ENCODE measurements at regions of chr6 and their contacts with region 1.

Region 1: GRCh38 chr6:127120787-127121636 is 2.5 kb downstream of the RSPO3 start:
- DNase-seq: peak; percentile 81 to 87
- H3K4me3 ChIP-seq: no peak overlapping the region
- H3K4me3 Mint-ChIP-seq: no peak overlapping the region
- H3K27ac Mint-ChIP-seq: peak overlapping the region; percentile 22
- H3K4me1 ChIP-seq: 0 out of 2 replicates have a peak, but pooled peaks cover 2% of the 10 kb centered on the region
- H3K4me1 Mint-ChIP-seq: peaks cover 14% of the 10 kb centered on the region
- H3K27me3 ChIP-seq: no peaks in the 10 kb centered on the region
- H3K27me3 Mint-ChIP-seq: no peaks in the 10 kb centered on the region
- CTCF ChIP-seq: peak; percentile 83 to 88

Region 2: DNA sequence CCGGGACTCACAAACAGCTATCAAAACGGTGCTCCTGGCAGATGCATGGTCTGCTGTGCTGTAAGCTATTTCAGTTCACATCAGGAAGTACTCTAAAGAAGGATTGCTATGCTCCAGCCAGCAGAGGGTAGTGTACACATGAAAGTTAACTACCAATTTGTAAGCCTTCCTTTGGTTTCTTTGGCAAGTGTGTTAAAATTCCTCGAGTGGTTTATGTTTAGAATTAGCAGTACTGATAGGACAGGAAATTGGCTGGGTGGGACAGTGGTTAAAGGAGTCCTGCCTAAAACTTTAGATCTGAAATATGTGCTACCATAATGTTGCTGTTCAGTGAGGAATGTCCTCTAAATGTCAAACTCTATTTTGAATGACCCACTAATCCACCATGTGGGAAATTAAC is 1087.3 kb before region 1 on chr6:
- CTCF ChIA-PET with region 1: no interaction called
- POLR2A ChIA-PET with region 1: no interaction called
- intact Hi-C with region 1: loop called (anchors 2 kb)
- DNase-seq: peak; percentile 60 to 68
- H3K4me3 ChIP-seq: no peak overlapping the region
- H3K4me3 Mint-ChIP-seq: no peak overlapping the region
- H3K27ac Mint-ChIP-seq: peak overlapping the region; percentile 48
- H3K4me1 ChIP-seq: peaks cover 54% of the 10 kb centered on the region
- H3K4me1 Mint-ChIP-seq: peaks cover 37% of the 10 kb centered on the region
- H3K27me3 ChIP-seq: no peaks in the 10 kb centered on the region
- H3K27me3 Mint-ChIP-seq: no peaks in the 10 kb centered on the region
- CTCF ChIP-seq: peak; percentile 47 to 78

Region 3: DNA sequence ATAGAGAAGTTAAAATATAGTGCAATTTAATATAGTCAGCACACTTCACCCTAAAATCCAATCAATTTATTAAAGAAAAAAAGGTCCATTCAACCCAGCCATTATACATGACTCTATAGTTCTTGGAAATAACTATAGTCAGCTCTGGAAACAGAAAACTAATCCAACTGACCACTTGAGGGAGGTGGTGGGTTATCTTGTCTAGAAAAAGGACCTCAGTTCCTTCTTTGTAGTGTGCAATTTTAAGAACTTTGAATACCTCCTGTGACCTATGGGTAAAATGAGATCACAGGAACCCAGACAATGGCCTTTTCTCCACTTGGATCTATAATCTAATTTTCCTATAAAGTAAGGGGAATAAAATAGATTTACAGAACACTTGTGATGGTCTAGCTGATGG is 944.7 kb before region 1 on chr6:
- CTCF ChIA-PET with region 1: no interaction called
- POLR2A ChIA-PET with region 1: no interaction called
- intact Hi-C with region 1: loop called (anchors 1 kb)
- DNase-seq: peak in 1 of 2 experiments; percentile 34
- H3K4me3 ChIP-seq: no peak overlapping the region
- H3K4me3 Mint-ChIP-seq: no peak overlapping the region
- H3K27ac Mint-ChIP-seq: no peak overlapping the region
- H3K4me1 ChIP-seq: peaks cover 6% of the 10 kb centered on the region
- H3K4me1 Mint-ChIP-seq: peaks cover 2% of the 10 kb centered on the region
- H3K27me3 ChIP-seq: no peaks in the 10 kb centered on the region
- H3K27me3 Mint-ChIP-seq: no peaks in the 10 kb centered on the region
- CTCF ChIP-seq: peak; percentile 29 to 49

Region 4: DNA sequence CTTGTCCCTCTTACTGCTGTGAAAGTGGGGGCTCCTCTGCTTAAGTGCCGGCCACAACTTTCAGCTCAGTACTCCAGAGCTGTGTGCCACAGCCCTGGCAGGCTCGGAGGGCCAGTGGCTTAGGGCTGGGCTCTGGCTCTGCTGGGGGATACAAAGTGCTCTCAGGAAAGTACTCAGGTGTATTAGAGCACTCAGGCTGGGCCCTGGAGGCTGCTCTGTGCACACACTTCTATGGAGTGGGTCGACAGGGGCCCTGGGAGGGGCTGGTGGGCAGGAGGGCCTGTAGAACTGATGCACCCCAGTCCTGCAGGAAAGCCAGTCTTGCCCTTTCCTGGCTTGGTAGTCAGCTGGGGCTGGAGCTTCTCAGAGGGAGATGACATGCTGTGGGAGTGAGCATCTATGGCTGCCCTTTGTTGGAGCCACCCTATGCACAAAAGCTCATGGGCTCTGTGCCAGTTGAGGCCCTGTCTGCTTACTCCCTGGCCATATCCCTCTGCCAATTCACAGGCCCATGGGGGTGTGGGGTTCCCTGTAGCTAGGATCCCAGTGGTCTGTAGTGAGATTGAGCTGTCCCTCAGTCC is 759.1 kb before region 1 on chr6:
- CTCF ChIA-PET with region 1: no interaction called
- POLR2A ChIA-PET with region 1: no interaction called
- intact Hi-C with region 1: loop called (anchors 1 kb)
- DNase-seq: no peak
- H3K4me3 ChIP-seq: no peak overlapping the region
- H3K4me3 Mint-ChIP-seq: no peak overlapping the region
- H3K27ac Mint-ChIP-seq: no peak overlapping the region
- H3K4me1 ChIP-seq: no peaks in the 10 kb centered on the region
- H3K4me1 Mint-ChIP-seq: no peaks in the 10 kb centered on the region
- H3K27me3 ChIP-seq: no peaks in the 10 kb centered on the region
- H3K27me3 Mint-ChIP-seq: no peaks in the 10 kb centered on the region
- CTCF ChIP-seq: no peak

Region 5: DNA sequence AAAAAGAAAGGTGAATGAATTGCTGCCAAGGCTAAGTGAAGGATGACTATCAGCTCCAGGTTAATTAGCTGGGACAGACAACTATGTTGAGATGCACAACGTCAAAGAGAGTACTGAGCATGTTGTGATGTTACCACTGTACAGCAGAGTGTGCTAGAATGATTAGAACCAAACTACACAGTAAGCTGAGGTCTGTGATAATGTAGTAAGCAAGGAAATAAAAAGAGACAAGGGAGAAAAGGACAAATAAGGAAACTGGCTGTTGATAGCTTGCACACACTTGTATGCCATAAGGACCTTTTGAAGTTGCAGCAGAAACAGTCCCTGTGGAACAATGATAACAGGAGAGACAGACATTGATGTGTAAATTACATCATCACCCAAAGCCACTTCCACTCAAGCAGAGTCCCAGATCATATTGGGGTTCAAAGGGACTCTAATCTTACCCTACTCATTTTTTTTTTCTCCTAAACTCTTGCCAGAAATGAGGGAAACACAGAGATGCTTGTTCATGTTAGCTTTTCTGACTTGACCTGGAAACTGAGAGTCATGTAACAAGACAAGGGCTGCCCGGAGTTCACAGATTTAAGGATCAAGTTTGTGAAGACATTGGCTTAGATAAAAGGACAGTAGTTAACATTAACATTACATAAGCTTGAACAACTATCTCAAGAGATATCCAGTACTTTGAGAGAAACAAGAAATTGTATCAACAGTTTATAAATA is 591.2 kb before region 1 on chr6:
- CTCF ChIA-PET with region 1: no interaction called
- POLR2A ChIA-PET with region 1: no interaction called
- intact Hi-C with region 1: loop called (anchors 1 kb)
- DNase-seq: no peak
- H3K4me3 ChIP-seq: no peak overlapping the region
- H3K4me3 Mint-ChIP-seq: no peak overlapping the region
- H3K27ac Mint-ChIP-seq: no peak overlapping the region
- H3K4me1 ChIP-seq: no peaks in the 10 kb centered on the region
- H3K4me1 Mint-ChIP-seq: no peaks in the 10 kb centered on the region
- H3K27me3 ChIP-seq: no peaks in the 10 kb centered on the region
- H3K27me3 Mint-ChIP-seq: no peaks in the 10 kb centered on the region
- CTCF ChIP-seq: no peak

Region 6: GRCh38 chr6:126804332-126805064 is 316.5 kb before region 1 on chr6:
- CTCF ChIA-PET with region 1: no interaction called
- POLR2A ChIA-PET with region 1: no interaction called
- intact Hi-C with region 1: loop called (anchors 1 kb)
- DNase-seq: peak; percentile 36 to 68
- H3K4me3 ChIP-seq: no peak overlapping the region
- H3K4me3 Mint-ChIP-seq: no peak overlapping the region
- H3K27ac Mint-ChIP-seq: no peak overlapping the region
- H3K4me1 ChIP-seq: peaks cover 36% of the 10 kb centered on the region
- H3K4me1 Mint-ChIP-seq: peaks cover 23% of the 10 kb centered on the region
- H3K27me3 ChIP-seq: no peaks in the 10 kb centered on the region
- H3K27me3 Mint-ChIP-seq: no peaks in the 10 kb centered on the region
- CTCF ChIP-seq: peak; percentile 66 to 71